ENCODE measurements at regions of chr13 and their contacts with region 1.

Region 1: GRCh38 chr13:36261976-36262375 is 35.6 kb downstream of the CCDC169 start:
- ATAC-seq: peak in 1 of 8 experiments; percentile 48
- H3K4me3 ChIP-seq: no peak overlapping the region
- H3K27ac ChIP-seq: no peak overlapping the region
- H3K4me1 ChIP-seq: no peaks in the 10 kb centered on the region

Region 2: GRCh38 chr13:35984776-35985453 is 277.1 kb before region 1 on chr13:
- in situ Hi-C with region 1: loop called in 4 of 9 experiments (anchors 10 to 25 kb)
- ATAC-seq: peak in 6 of 8 experiments; percentile 64 to 98 (median 98)
- H3K4me3 ChIP-seq: no peak overlapping the region
- H3K27ac ChIP-seq: peak overlapping the region in 1 of 2 donors; percentile 60
- H3K4me1 ChIP-seq: peaks cover 25 to 30% of the 10 kb centered on the region in 2 donors

Region 3: GRCh38 chr13:36520111-36520510 is 258.1 kb after region 1 on chr13:
- in situ Hi-C with region 1: no loop called
- ATAC-seq: no peak
- H3K4me3 ChIP-seq: no peak overlapping the region
- H3K27ac ChIP-seq: no peak overlapping the region
- H3K4me1 ChIP-seq: no peaks in the 10 kb centered on the region